CD14-positive monocyte (primary cell): ENCODE measurements at regions of chr17 and their contacts with region 1.

Region 1: GRCh38 chr17:82791532-82791931 is 39.7 kb downstream of the TBCD start:
- DNase-seq: no peak
- H3K4me3 ChIP-seq: no peak overlapping the region
- H3K4me3 Mint-ChIP-seq: no peak overlapping the region
- H3K27ac ChIP-seq: no peak overlapping the region
- H3K27ac Mint-ChIP-seq: peak overlapping the region in 1 of 7 donors; percentile 2
- H3K4me1 ChIP-seq: no peaks in the 10 kb centered on the region
- H3K4me1 Mint-ChIP-seq: no peaks in the 10 kb centered on the region
- H3K27me3 ChIP-seq: no peaks in the 10 kb centered on the region
- H3K27me3 Mint-ChIP-seq: peaks cover 0 to 3% (median 2%) of the 10 kb centered on the region in 3 donors
- CTCF ChIP-seq: no peak

Region 2: DNA sequence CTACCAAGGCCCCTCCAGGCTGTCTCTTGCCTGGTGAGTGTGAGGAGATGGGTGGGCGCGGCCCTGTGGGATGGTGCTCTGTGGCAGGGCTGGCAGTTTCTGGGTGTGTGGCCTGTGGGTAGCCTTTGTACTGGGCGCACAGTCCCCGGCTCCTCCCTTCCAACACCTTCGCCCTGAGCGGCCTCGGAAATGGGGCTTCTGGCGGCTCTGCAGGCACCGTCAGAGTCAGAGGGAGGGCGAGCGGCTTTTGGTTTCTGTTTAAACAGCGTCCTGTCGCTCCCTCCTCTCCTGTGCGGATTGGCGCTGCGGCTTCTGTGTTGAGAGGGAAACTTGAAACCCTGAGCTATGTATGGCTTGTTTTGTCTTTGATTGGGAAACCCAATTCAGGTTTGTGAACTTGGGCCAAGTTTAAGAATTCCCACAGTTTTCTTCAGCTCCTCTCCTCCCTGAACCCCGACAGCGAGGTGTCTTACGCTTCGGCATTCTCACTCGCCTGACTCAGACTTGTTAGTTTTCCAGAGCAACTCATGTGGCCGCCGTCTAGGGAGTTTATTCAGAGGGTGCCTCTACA is 56.6 kb after region 1 on chr17:
- intact Hi-C with region 1: no loop called
- DNase-seq: no peak
- H3K4me3 ChIP-seq: no peak overlapping the region
- H3K4me3 Mint-ChIP-seq: peak overlapping the region; percentile 30 to 49
- H3K27ac ChIP-seq: no peak overlapping the region
- H3K27ac Mint-ChIP-seq: peak overlapping the region in 1 of 7 donors; percentile 18
- H3K4me1 ChIP-seq: peaks cover 10 to 13% of the 10 kb centered on the region in 2 donors
- H3K4me1 Mint-ChIP-seq: peaks cover 12% of the 10 kb centered on the region
- H3K27me3 ChIP-seq: no peaks in the 10 kb centered on the region
- H3K27me3 Mint-ChIP-seq: peaks cover 0 to 12% (median 5%) of the 10 kb centered on the region in 3 donors
- CTCF ChIP-seq: no peak

Region 3: DNA sequence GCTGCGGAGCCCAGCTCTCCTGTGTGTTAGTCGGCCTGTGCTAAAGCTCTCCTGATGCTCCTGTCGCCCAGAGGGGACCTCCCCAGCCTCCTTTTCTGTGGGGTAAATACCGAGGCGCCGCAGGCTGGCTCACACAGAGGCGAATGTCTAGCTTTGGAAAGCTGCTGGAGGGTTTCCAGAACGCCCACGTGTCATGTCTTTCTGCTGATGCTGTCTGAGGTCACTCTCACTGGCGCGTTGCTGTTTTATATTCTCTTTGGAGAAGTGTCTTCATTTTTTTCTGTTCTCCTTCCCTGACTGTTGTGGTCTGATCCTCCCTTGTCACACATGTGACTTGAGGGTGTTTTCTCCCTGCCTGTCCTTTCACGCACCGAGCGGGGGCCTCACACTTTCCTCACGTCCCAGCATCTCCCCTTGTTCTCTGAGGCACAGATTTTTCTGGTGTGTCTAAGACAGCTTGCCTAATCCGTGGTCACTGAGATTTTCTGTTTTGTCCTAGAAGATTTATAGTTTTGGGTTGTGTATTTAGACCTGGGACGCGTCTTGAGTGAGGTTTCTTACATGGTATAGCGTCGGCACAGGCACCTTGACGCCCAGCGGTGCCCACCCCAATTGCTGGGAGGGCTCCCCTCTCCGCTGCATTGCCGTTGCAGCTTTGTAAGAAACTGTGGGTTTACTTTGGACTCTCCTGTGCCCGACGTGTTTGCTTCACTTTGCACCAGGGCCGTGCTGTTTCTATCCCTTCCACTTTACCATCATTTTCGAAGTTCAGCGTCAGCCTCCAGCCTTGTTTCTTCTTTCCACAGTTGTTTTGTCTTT is 140.4 kb after region 1 on chr17:
- intact Hi-C with region 1: loop called in 1 of 2 experiments (anchors 10 kb)
- DNase-seq: no peak
- H3K4me3 ChIP-seq: no peak overlapping the region
- H3K4me3 Mint-ChIP-seq: no peak overlapping the region
- H3K27ac ChIP-seq: no peak overlapping the region
- H3K27ac Mint-ChIP-seq: peak overlapping the region in 3 of 7 donors; percentile 21 to 58 (median 38)
- H3K4me1 ChIP-seq: no peaks in the 10 kb centered on the region
- H3K4me1 Mint-ChIP-seq: no peaks in the 10 kb centered on the region
- H3K27me3 ChIP-seq: no peaks in the 10 kb centered on the region
- H3K27me3 Mint-ChIP-seq: peaks cover 0 to 2% (median 0%) of the 10 kb centered on the region in 3 donors
- CTCF ChIP-seq: no peak